ENCODE measurements at regions of chr1 and their contacts with region 1.

Region 1: DNA sequence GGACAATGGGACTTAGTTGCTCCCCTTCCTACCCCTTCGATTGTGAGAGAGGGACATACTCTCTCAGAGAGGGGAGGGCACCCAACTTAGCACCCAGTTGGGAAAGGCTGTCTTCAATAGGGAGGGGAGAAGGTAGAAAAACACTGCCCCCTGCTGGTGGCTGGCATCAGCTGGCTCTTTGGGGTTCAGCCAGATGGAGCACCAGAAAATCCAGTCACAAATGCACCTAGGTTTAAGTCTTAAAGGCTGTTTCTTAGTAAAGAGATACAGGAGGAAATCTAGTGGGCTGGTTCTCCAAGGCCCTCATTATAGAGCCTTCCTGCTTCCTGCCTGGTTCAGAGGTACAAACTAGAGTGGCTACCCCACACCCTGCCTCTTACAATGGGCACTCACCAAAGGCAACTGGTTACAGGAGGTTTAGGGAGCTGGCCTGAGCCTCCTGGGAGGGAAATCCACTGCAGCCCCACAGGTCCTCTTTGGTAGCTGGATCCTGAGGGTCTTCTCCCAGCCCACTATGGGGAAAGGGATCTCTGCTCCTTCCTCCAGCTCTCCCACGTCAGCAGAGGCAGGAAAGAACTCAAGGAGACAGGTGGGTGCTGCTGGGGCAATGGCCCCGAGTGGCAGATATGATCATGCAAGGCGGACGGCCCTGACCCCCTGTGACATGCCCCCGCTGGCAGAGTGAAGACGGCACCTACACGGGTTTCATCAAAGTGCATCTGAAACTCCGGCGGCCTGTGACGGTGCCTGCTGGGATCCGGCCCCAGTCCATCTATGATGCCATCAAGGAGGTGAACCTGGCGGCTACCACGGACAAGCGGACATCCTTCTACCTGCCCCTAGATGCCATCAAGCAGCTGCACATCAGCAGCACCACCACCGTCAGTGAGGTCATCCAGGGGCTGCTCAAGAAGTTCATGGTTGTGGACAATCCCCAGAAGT is 28.3 kb downstream of the EIF2D start:
- DNase-seq: peak; percentile 85
- H3K4me3 Mint-ChIP-seq: no peak overlapping the region
- H3K27ac Mint-ChIP-seq: no peak overlapping the region
- H3K4me1 Mint-ChIP-seq: no peaks in the 10 kb centered on the region
- H3K27me3 Mint-ChIP-seq: peaks cover 11% of the 10 kb centered on the region
- CTCF ChIP-seq: peak; percentile 96

Region 2: DNA sequence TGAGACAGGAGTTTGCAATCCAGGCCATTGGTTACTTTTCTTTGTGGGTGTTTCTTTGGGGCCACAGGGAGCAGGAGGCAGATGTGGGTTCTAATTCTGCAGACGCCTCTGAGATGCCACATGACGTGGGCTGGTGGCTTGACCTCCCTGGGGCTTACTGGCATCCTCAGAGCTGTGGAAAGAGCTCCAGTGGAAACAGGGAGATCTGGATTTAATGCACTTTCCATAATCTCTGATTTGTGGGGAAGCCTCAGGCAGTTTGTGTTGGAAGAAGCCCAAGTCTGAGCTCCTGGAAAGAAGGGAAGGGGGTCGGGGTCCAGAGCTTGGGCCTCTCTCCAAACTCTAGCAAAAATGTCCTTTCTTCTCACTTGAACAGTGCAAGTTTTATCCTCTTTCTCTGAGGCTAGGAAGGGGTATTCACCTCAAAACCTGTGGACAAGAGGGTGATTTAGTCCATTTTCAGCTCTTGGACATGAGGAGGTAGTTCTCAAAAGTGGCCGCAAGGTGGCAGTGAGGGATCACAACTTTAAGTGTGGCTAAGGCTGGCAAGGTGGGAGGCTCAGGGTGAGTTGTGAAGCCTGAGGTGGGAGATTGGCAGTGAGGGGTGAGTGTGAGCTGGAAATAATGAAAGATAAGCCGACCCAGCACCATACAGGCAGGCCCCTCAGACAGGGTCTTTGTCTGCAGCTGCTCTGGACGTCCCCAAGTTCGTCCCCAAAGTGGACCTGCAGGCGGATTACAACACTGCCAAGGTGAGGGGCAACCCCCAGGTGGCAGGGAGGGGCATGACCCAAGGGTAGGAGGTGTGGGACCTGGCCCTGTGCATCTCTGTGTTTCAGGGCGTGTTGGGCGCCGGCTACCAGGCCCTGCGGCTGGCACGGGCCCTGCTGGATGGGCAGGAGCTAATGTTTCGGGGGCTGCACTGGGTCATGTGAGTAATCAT is 104.5 kb before region 1 on chr1:
- CTCF ChIA-PET with region 1: interaction called, 24 read pairs
- intact Hi-C with region 1: loop called (anchors 5 kb)
- DNase-seq: peak; percentile 73
- H3K4me3 Mint-ChIP-seq: no peak overlapping the region
- H3K27ac Mint-ChIP-seq: no peak overlapping the region
- H3K4me1 Mint-ChIP-seq: peaks cover 23% of the 10 kb centered on the region
- H3K27me3 Mint-ChIP-seq: no peaks in the 10 kb centered on the region
- CTCF ChIP-seq: peak; percentile 81

Region 3: DNA sequence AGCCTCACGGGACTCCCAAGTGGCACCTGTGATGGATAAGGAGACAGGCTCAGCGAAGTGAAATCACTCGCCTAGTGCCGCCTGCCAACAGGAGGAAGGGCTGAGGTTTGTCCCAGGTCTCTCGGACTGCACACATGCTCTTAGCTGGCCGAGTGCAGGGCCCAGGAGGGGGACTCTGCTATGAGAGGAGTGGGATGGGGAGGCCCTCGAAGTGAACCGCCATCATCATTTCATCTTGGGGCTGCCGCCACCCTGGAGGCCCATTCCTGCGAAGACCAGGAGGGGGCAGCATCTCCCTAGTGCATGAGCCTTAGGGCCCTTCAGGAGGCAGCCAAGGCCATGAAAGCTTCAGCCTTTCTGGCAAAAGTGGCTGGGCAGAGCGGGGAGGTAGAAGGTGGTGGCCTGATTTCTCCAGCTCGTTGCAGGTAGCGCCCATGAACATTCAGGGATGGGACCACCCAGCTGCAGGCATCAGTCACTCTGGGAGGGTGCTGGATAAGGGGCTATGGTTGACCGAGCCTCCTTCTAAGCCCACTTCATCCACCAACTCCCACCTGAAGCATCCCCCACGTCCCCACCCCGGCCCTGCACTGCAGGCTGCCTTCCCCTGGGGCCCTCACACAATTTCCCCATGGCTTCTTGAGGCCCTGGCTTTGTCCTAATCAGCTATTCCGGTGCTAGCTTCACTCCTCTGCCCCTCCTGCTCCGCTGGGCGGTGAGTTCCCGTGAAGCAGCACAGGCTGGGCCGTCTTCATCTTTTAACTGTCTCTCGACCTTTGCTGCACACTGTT is 93.8 kb before region 1 on chr1:
- CTCF ChIA-PET with region 1: interaction called, 18 read pairs
- intact Hi-C with region 1: loop called (anchors 1 kb)
- DNase-seq: peak; percentile 84
- H3K4me3 Mint-ChIP-seq: no peak overlapping the region
- H3K27ac Mint-ChIP-seq: no peak overlapping the region
- H3K4me1 Mint-ChIP-seq: no peaks in the 10 kb centered on the region
- H3K27me3 Mint-ChIP-seq: no peaks in the 10 kb centered on the region
- CTCF ChIP-seq: peak; percentile 95

Region 4: DNA sequence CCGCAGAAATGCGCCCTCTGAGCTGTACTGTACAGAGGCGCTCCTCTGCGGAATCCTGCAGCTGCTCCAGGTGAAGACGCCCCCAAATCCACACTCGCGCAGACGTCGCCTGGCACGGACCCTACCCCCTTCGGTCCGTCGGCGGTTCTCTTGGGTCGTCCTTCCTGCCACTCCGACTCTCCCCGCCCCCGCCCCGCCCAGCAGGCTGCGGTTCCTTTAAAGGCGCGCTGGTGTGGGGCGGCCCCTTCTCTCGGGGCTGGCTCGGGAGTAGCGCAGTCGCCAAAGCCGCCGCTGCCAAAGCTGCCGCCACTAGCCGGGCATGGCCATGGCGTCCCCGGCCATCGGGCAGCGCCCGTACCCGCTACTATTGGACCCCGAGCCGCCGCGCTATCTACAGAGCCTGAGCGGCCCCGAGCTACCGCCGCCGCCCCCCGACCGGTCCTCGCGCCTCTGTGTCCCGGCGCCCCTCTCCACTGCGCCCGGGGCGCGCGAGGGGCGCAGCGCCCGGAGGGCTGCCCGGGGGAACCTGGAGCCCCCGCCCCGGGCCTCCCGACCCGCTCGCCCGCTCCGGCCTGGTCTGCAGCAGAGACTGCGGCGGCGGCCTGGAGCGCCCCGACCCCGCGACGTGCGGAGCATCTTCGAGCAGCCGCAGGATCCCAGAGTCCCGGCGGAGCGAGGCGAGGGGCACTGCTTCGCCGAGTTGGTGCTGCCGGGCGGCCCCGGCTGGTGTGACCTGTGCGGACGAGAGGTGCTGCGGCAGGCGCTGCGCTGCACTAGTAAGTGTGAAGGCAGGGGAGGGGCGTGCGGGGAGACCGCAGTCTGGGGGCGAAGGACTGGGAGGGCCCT is 76.5 kb before region 1 on chr1 and contains the start of gene RASSF5:
- CTCF ChIA-PET with region 1: interaction called, 6 read pairs
- intact Hi-C with region 1: loop called (anchors 1 kb)
- DNase-seq: peak; percentile 84
- H3K4me3 Mint-ChIP-seq: peak within 1 kb of the TSS; percentile 82
- H3K27ac Mint-ChIP-seq: peak within 1 kb of the TSS; percentile 28
- H3K4me1 Mint-ChIP-seq: peaks cover 62% of the 10 kb centered on the region
- H3K27me3 Mint-ChIP-seq: peaks cover 45% of the 10 kb centered on the region
- CTCF ChIP-seq: no peak
- total RNA-seq, gene RASSF5: 6.1 and 6.5 TPM in 2 replicates

Region 5: DNA sequence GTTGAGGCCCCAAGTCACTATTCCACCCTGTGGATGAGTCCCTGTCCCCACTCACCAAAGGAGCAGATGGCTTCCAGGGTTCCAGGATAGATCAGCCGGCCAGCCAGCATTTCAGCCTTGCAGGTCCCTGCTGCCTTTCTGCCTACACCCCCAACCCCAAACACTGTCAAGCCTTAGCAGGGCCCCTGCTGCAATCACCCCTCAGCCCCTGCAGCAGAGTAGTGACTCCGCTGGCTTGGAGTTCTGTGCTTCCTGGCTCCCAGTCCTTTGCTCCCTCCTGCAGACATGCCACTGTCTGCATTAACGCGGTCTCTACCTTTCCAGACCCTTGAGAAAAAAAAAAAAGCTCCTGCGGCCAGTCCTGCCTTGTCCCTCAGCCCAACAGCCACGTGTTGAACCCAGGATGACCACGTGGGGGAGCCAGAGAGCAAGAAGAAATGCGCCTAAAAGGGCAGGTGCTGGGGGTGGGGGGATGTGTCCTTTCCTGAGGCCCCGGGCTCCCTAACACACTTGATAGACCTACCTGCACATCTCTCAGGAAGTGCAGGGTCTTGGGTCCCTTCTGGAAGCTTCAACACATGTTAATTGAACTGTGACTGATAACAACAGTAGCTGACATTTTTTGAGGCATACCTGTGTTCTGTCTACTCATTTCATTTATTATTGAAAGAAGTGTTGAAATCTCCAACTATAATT is 39.3 kb before region 1 on chr1:
- CTCF ChIA-PET with region 1: interaction called, 26 read pairs
- intact Hi-C with region 1: loop called (anchors 1 kb)
- DNase-seq: peak; percentile 91
- H3K4me3 Mint-ChIP-seq: no peak overlapping the region
- H3K27ac Mint-ChIP-seq: no peak overlapping the region
- H3K4me1 Mint-ChIP-seq: peaks cover 12% of the 10 kb centered on the region
- H3K27me3 Mint-ChIP-seq: peaks cover 2% of the 10 kb centered on the region
- CTCF ChIP-seq: peak; percentile 90

Measured in Calu3 (cell line).